Ascending aorta (tissue), 2 donors: ENCODE measurements at regions of chr1 and their contacts with region 1.

Region 1: GRCh38 chr1:203795441-203796235 is at the starts of genes ZBED6 and ZC3H11A:
- DNase-seq: peak; percentile 97 to 100
- H3K4me3 ChIP-seq: peak within 1 kb of the TSS; percentile 82 to 92
- H3K27ac ChIP-seq: peak within 1 kb of the TSS; percentile 96 to 98
- H3K4me1 ChIP-seq: peaks cover 9 to 38% of the 10 kb centered on the region in 2 donors
- H3K27me3 ChIP-seq: no peaks in the 10 kb centered on the region
- CTCF ChIP-seq: no peak
- total RNA-seq, gene ZBED6: 1.5 TPM
- total RNA-seq, gene ZC3H11A: 44.4 TPM

Region 2: DNA sequence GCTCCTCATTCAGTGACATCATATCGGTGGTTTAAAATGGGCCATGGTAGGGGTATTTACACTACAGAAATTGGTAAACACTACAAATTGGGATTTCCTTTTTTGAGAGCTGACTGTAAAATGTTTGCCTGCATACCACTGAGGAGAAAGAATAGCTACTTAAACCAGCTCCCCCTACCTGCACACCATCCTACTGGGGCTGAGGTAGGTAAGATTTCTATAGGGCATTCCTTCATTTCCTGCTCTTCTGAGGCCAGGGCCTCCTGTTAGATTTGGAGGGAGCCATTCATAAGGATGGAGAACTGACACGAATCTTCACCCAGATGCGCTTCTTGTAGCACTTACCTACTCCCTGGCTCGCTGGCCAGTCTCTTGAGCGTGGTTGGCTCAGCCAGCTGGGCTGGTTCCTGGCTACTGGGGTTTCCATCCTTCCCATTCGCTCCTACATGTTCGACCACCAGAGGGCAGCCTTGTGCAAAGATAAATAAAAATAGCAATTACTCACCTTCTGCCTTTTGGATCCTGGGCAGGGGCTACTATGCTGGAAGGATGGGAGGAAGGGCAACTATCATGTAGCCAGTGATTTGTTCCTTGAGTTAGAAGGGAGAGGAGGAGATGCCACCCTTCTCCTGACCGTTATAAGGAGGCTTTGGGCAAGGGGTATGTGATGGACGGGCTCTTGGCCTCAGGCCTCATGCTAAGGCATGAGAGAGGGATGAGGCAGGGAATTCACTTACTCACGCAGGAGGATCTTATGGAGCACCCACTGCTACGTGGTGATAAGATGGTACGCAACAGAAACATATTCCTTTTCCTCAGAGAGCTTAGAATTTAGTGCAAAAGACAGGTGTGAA is 291.0 kb before region 1 on chr1:
- intact Hi-C with region 1: loop called (anchors 10 kb)
- DNase-seq: peak in 1 of 2 donors; percentile 92
- H3K4me3 ChIP-seq: no peak overlapping the region
- H3K27ac ChIP-seq: no peak overlapping the region
- H3K4me1 ChIP-seq: peaks cover 0 to 13% of the 10 kb centered on the region in 2 donors
- H3K27me3 ChIP-seq: no peaks in the 10 kb centered on the region
- CTCF ChIP-seq: peak; percentile 75 to 87 (median 84)

Region 3: GRCh38 chr1:203769505-203770343 is 25.9 kb before region 1 on chr1:
- intact Hi-C with region 1: loop called (anchors 1 kb)
- DNase-seq: peak; percentile 51 to 95
- H3K4me3 ChIP-seq: peak overlapping the region in 1 of 2 donors; percentile 43
- H3K27ac ChIP-seq: peak overlapping the region; percentile 31 to 36
- H3K4me1 ChIP-seq: peaks cover 3 to 4% of the 10 kb centered on the region in 2 donors
- H3K27me3 ChIP-seq: no peaks in the 10 kb centered on the region
- CTCF ChIP-seq: no peak

Region 4: DNA sequence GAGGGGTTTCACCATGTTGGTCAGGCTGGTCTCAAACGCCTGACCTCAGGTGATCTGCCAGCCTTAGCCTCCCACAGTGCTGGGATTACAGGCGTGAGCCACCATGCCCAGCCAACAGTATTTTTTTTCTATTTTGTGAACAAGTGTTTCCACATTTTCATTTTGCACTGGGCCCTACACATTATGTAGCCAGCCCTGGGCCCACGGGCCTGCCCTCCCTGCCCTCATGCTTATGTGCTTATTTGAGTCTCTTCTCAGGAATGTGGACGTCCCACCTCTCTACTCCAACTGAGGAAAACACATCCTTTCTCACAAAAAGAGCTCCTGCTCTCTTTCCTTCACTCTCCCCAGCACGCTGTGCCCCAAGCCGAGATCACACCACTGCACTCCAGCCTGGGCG is 13.7 kb before region 1 on chr1:
- intact Hi-C with region 1: no loop called
- DNase-seq: peak in 1 of 2 donors; percentile 24
- H3K4me3 ChIP-seq: no peak overlapping the region
- H3K27ac ChIP-seq: no peak overlapping the region
- H3K4me1 ChIP-seq: no peaks in the 10 kb centered on the region
- H3K27me3 ChIP-seq: no peaks in the 10 kb centered on the region
- CTCF ChIP-seq: no peak

Region 5: GRCh38 chr1:203807196-203807595 is 11.6 kb after region 1 on chr1:
- intact Hi-C with region 1: no loop called
- DNase-seq: no peak
- H3K4me3 ChIP-seq: no peak overlapping the region
- H3K27ac ChIP-seq: no peak overlapping the region
- H3K4me1 ChIP-seq: peaks cover 4 to 25% of the 10 kb centered on the region in 2 donors
- H3K27me3 ChIP-seq: no peaks in the 10 kb centered on the region
- CTCF ChIP-seq: no peak

Region 6: GRCh38 chr1:203828002-203828401 is 32.4 kb after region 1 on chr1:
- intact Hi-C with region 1: no loop called
- DNase-seq: no peak
- H3K4me3 ChIP-seq: no peak overlapping the region
- H3K27ac ChIP-seq: peak overlapping the region; percentile 4 to 47
- H3K4me1 ChIP-seq: peaks cover 3 to 15% of the 10 kb centered on the region in 2 donors
- H3K27me3 ChIP-seq: no peaks in the 10 kb centered on the region
- CTCF ChIP-seq: no peak

Region 7: DNA sequence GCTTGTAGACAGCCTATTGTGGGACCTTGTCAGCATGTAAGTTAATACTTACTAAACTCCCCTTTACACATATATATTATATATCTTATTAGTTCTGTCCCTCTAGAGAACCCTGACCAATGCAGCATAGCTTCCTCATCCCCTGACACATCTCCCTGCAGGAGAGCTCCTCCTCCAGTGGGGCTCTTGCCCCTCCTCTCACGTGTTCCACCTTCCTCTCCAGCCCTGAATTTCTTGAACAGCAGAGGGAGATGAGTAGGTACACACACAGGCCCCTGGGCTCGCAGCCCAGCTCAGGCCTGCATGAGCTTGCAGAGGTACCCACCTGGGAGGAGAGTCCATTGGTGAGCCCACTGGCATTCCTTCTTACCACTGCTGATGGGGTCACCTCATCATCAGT is 445.4 kb after region 1 on chr1:
- intact Hi-C with region 1: no loop called
- DNase-seq: no peak
- H3K4me3 ChIP-seq: no peak overlapping the region
- H3K27ac ChIP-seq: no peak overlapping the region
- H3K4me1 ChIP-seq: no peaks in the 10 kb centered on the region
- H3K27me3 ChIP-seq: no peaks in the 10 kb centered on the region
- CTCF ChIP-seq: no peak